ENCODE measurements at regions of chr6 and their contacts with region 1.

Region 1: DNA sequence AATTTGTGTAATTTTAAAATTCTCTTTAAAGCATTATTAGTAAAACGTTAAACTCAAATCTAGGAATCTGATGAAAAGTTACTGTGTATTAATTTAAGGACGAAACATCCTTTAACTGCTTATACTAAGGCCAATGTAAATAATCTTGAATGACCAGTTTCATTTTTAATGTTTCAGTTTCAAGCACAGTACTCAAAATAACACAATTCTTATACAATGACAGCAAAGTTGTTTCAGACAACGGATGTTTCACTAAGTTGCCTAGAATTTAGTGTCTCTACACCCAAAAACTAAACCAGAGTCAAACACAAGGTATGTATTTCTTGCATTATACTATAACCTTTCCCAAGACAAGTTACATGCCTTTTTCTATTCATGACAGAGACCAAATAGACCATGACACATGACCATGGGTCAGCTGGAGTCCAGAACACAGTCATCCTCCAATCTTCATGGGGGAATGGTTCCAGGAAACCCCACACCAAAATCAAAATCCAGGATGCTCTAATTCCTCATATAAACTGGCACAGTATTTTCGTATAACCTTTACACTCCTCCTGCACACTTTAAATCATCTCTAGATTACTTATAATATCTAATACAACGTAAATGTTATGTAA is 7.7 kb downstream of the PHIP start:
- DNase-seq: no peak
- H3K4me3 Mint-ChIP-seq: no peak overlapping the region
- H3K27ac Mint-ChIP-seq: no peak overlapping the region
- H3K4me1 Mint-ChIP-seq: peaks cover 57% of the 10 kb centered on the region
- H3K27me3 Mint-ChIP-seq: no peaks in the 10 kb centered on the region

Region 2: GRCh38 chr6:78615430-78615904 is 454.8 kb before region 1 on chr6:
- intact Hi-C with region 1: no loop called
- DNase-seq: no peak
- H3K4me3 Mint-ChIP-seq: no peak overlapping the region
- H3K27ac Mint-ChIP-seq: no peak overlapping the region
- H3K4me1 Mint-ChIP-seq: peaks cover 6% of the 10 kb centered on the region
- H3K27me3 Mint-ChIP-seq: no peaks in the 10 kb centered on the region

Region 3: DNA sequence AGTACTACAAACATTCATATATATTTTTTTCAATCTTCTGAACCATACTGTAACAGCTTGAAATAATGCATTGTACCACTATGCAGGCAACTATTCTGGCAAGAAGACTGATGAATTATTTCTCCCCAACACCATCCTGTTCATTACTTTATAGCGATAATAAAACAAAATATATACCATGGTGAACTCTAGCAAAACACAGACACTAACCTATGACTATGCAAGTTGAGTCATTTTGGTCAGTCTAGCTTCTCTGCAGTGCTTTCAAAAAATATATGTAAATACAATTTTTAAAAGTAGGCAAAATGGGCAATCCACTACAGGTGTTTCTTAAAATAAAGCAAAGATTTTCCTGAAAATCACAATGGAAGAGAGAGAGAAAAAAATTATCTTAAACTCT is 12.6 kb before region 1 on chr6:
- intact Hi-C with region 1: loop called (anchors 1 kb)
- DNase-seq: no peak
- H3K4me3 Mint-ChIP-seq: no peak overlapping the region
- H3K27ac Mint-ChIP-seq: no peak overlapping the region
- H3K4me1 Mint-ChIP-seq: peaks cover 17% of the 10 kb centered on the region
- H3K27me3 Mint-ChIP-seq: no peaks in the 10 kb centered on the region

Region 4: DNA sequence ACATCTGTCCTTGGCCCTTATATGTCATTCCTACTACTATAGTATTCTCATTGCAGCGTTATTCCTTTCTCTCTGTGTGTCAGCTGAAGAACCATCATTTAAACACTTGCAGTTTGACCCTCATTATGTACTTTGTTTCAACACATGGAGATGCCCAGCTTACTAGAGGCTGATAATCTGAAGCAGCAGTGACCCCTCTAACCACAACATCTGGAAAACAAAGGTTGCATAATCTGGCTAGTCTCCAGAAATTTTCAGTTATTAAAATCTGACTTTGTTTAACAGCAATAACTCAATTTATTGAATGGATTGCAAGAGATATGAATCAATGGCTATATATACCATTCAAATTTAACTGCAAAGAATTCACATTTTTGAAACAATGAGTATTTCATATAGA is 14.4 kb after region 1 on chr6:
- intact Hi-C with region 1: no loop called
- DNase-seq: no peak
- H3K4me3 Mint-ChIP-seq: no peak overlapping the region
- H3K27ac Mint-ChIP-seq: no peak overlapping the region
- H3K4me1 Mint-ChIP-seq: peaks cover 4% of the 10 kb centered on the region
- H3K27me3 Mint-ChIP-seq: peaks cover 42% of the 10 kb centered on the region

Region 5: GRCh38 chr6:79466207-79466834 is 396.0 kb after region 1 on chr6:
- intact Hi-C with region 1: loop called (anchors 5 kb)
- DNase-seq: no peak
- H3K4me3 Mint-ChIP-seq: no peak overlapping the region
- H3K27ac Mint-ChIP-seq: no peak overlapping the region
- H3K4me1 Mint-ChIP-seq: no peaks in the 10 kb centered on the region
- H3K27me3 Mint-ChIP-seq: peaks cover 3% of the 10 kb centered on the region

Measured in activated T-helper 1 cell treated with anti-CD3 and anti-CD28 coated beads, Interleukin-12 subunit alpha, Interleukin-12 subunit beta, Interleukin-2, Interleukin-4 antibody, amounts not matched to agents 30 ng/mL and 10 ng/mL and 1 ng/mL, durations not matched to agents 14 hours and 24 hours and 36 hours (primary cell).